Upper lobe of right lung (tissue), 1 donor: ENCODE measurements at regions of chr5 and their contacts with region 1.

Region 1: DNA sequence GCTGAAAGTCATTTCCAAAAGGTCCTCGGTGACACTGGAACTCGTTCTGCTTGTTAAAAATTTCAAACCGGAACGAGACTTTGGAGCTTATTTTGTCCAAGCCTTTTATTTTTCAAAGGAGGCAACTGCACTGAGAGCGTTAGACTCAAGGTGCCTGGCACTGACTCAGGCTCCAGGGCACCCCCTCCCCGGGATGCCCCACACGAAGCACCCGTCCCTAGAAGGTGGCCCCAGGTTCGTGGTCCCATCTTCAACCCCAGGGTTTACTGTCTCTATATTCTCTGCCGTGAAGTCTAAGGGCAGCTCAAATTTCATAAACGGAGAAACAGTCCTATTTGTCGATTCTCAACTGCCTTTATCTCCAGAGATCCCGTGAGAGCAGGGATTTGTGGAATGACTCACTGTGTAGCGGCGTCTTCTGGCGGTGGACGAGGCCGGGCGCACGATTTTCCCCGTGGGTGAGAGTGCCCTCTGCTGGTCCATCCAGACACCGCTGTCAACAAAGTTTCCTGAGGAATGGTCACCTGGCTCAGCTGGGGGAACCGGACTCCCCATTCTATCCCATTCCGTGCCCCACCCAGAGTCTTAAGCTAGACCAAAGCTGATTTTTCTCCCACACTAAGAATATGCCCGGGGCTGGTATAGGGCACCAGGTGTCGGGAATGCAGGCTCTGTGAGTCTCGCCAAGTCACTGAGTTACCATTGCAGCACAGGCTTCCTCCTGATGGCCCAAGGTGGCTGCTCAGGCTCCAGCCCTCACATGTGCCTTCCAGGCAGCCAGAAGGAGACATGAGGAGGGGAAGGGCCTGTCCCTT is 27.1 kb upstream of the SLC6A19 start:
- DNase-seq: peak; percentile 83
- ATAC-seq: peak; percentile 82
- H3K4me3 ChIP-seq: no peak overlapping the region
- H3K27ac ChIP-seq: no peak overlapping the region
- H3K4me1 ChIP-seq: no peaks in the 10 kb centered on the region
- H3K27me3 ChIP-seq: no peaks in the 10 kb centered on the region
- CTCF ChIP-seq: peak; percentile 80

Region 2: GRCh38 chr5:923281-923873 is 251.0 kb before region 1 on chr5:
- intact Hi-C with region 1: loop called (anchors 10 kb)
- DNase-seq: peak; percentile 89
- ATAC-seq: peak; percentile 92
- H3K4me3 ChIP-seq: no peak overlapping the region
- H3K27ac ChIP-seq: no peak overlapping the region
- H3K4me1 ChIP-seq: peaks cover 13% of the 10 kb centered on the region
- H3K27me3 ChIP-seq: peaks cover 19% of the 10 kb centered on the region
- CTCF ChIP-seq: peak; percentile 87

Region 3: GRCh38 chr5:1291611-1292080 is 117.3 kb after region 1 on chr5:
- intact Hi-C with region 1: no loop called
- DNase-seq: peak; percentile 36
- ATAC-seq: no peak
- H3K4me3 ChIP-seq: no peak overlapping the region
- H3K27ac ChIP-seq: no peak overlapping the region
- H3K4me1 ChIP-seq: no peaks in the 10 kb centered on the region
- H3K27me3 ChIP-seq: peaks cover 23% of the 10 kb centered on the region
- CTCF ChIP-seq: no peak